Transverse colon (tissue), 4 donors: ENCODE measurements at regions of chr6 and their contacts with region 1.

Region 1: DNA sequence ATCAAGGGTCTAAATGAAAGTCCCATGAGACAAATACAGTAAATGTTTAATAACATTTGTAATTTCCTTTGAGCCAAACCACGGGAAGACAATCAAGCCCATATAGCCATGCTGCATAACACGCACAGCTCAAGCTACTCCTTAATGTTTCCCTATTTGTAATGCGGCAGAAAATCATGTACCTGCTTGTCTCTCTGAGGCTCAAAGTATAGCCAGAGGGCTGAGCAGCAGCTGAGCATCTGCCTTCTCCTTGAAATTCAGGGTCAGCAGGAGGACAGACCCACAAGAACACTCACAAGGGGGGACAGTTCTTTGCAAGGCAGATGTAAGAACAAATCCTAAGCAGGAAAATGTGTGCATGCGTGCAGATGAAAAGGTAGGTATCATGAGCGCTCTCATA is 45.8 kb upstream of the JARID2 start:
- DNase-seq: no peak
- H3K4me3 ChIP-seq: no peak overlapping the region
- H3K27ac ChIP-seq: no peak overlapping the region
- H3K4me1 ChIP-seq: no peaks in the 10 kb centered on the region
- H3K27me3 ChIP-seq: no peaks in the 10 kb centered on the region
- CTCF ChIP-seq: no peak
- EP300 ChIP-seq: no peak
- POLR2A ChIP-seq: no peak

Region 2: GRCh38 chr6:15152700-15153099 is 47.4 kb before region 1 on chr6:
- in situ Hi-C with region 1: no loop called
- intact Hi-C with region 1: no loop called
- DNase-seq: no peak
- H3K4me3 ChIP-seq: no peak overlapping the region
- H3K27ac ChIP-seq: no peak overlapping the region
- H3K4me1 ChIP-seq: no peaks in the 10 kb centered on the region
- H3K27me3 ChIP-seq: no peaks in the 10 kb centered on the region
- CTCF ChIP-seq: no peak
- EP300 ChIP-seq: no peak
- POLR2A ChIP-seq: no peak

Region 3: GRCh38 chr6:15184441-15184861 is 15.6 kb before region 1 on chr6:
- in situ Hi-C with region 1: no loop called
- intact Hi-C with region 1: loop called (anchors 1 kb)
- DNase-seq: no peak
- H3K4me3 ChIP-seq: no peak overlapping the region
- H3K27ac ChIP-seq: no peak overlapping the region
- H3K4me1 ChIP-seq: no peaks in the 10 kb centered on the region
- H3K27me3 ChIP-seq: no peaks in the 10 kb centered on the region
- CTCF ChIP-seq: no peak
- EP300 ChIP-seq: no peak
- POLR2A ChIP-seq: no peak

Region 4: GRCh38 chr6:15628499-15629131 is 428.5 kb after region 1 on chr6:
- in situ Hi-C with region 1: no loop called
- intact Hi-C with region 1: no loop called
- DNase-seq: no peak
- H3K4me3 ChIP-seq: no peak overlapping the region
- H3K27ac ChIP-seq: peak overlapping the region in 3 of 4 donors; percentile 14 to 33 (median 26)
- H3K4me1 ChIP-seq: peaks cover 0 to 18% (median 0%) of the 10 kb centered on the region in 4 donors
- H3K27me3 ChIP-seq: no peaks in the 10 kb centered on the region
- CTCF ChIP-seq: no peak
- EP300 ChIP-seq: no peak
- POLR2A ChIP-seq: no peak